ENCODE measurements at regions of chr4 and their contacts with region 1.

Region 1: GRCh38 chr4:2412885-2413716 is 5.3 kb downstream of the ZFYVE28 start:
- DNase-seq: peak; percentile 94
- H3K4me3 Mint-ChIP-seq: peak overlapping the region; percentile 59
- H3K27ac Mint-ChIP-seq: peak overlapping the region; percentile 97
- H3K4me1 Mint-ChIP-seq: peaks cover 77% of the 10 kb centered on the region
- H3K27me3 Mint-ChIP-seq: peaks cover 20% of the 10 kb centered on the region

Region 2: DNA sequence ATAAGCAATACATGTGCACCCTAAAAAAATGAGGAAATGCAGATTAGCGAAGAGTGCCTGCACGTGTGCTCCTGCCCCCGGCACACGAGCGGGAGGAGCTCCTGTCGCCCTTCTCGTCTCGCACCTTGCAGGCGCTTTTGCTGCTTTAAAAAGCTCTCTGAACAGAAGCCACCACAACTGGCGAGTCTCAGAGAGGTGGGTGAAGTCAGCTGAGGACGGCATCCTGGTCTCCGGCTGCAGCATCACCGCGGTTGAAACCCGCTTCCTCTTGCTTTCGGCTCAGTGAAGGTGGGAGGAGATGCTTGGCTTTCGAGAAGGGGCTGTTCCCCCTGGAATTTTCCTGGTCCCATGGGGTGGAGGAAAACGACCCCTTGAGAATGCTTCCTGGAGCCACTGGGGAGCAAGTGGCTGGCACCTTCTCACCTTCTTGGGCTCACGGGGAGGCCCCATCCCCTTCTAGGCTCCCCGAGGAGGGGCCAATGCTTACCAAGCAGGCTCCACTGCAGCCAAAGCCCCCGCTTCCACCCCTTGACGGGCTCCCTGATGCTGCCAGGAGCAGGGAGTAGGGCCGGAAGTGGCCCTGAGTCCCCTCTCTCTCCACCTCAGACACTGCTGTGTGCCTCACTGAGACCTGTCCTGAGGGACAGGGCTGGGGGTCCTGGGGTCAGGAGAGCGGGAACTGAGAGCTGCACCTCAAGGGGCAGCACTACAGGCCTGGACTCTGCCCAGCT is 122.0 kb before region 1 on chr4:
- CTCF ChIA-PET with region 1: no interaction called
- POLR2A ChIA-PET with region 1: no interaction called
- DNase-seq: peak; percentile 77
- H3K4me3 Mint-ChIP-seq: peak overlapping the region; percentile 43
- H3K27ac Mint-ChIP-seq: peak overlapping the region; percentile 86
- H3K4me1 Mint-ChIP-seq: peaks cover 25% of the 10 kb centered on the region
- H3K27me3 Mint-ChIP-seq: peaks cover 7% of the 10 kb centered on the region

Region 3: DNA sequence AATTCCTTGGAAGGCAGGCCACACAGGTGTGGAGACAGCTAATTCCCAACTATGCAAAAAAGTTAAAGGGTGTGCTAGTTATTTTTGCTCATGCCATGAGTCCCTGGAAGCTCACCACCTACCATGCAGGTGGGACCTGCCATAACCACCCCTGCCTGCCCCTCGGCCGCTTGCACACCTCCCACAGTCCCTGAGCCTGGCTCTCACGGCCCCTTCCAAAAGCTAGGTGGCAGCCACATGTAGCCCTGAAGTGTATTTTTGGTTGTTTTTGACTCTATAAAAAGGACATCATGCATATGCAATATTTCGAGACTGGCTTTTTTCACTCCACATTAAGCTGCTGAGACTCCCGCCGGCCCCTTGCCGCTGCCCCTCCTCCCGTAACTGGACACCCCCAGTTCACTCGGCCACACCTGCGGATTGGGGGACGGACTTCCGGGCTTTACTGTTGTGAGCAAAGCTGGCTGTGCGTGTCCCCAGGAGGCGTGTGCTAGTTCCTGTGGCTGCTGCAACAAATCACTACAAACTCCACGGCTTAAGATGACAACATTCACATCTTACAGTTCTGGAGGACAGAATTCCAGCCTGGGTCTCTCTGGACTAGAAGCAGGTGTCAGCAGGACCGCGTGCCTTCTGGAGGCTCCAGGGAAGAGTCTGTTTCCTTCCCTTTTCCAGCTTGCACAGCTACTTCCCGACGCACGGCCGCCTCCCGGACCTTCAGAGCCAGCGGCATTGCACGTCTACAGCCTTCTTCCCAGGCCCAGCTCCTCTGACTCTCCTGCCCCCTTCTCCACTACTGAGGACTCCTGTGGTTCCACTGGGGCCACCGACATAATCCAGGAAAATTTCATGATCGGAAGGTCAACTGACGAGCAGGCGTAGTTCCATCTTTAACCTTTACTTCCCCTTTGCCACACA is 19.5 kb before region 1 on chr4:
- CTCF ChIA-PET with region 1: interaction called, 11 read pairs
- POLR2A ChIA-PET with region 1: no interaction called
- DNase-seq: peak; percentile 17
- H3K4me3 Mint-ChIP-seq: no peak overlapping the region
- H3K27ac Mint-ChIP-seq: peak overlapping the region; percentile 76
- H3K4me1 Mint-ChIP-seq: peaks cover 18% of the 10 kb centered on the region
- H3K27me3 Mint-ChIP-seq: peaks cover 23% of the 10 kb centered on the region

Region 4: GRCh38 chr4:2402029-2402428 is 11.1 kb before region 1 on chr4:
- CTCF ChIA-PET with region 1: interaction called, 25 read pairs
- POLR2A ChIA-PET with region 1: no interaction called
- DNase-seq: no peak
- H3K4me3 Mint-ChIP-seq: peak overlapping the region; percentile 40
- H3K27ac Mint-ChIP-seq: peak overlapping the region; percentile 51
- H3K4me1 Mint-ChIP-seq: peaks cover 22% of the 10 kb centered on the region
- H3K27me3 Mint-ChIP-seq: no peaks in the 10 kb centered on the region